ENCODE measurements at regions of chr19 and their contacts with region 1.

Region 1: GRCh38 chr19:40348125-40348913 is at the starts of genes C19orf47 and PLD3:
- DNase-seq: peak; percentile 99 to 100 (median 100)
- ATAC-seq: peak; percentile 98 to 99
- H3K4me3 ChIP-seq: peak within 1 kb of the TSS; percentile 84
- H3K27ac ChIP-seq: peak within 1 kb of the TSS; percentile 69
- H3K4me1 ChIP-seq: peaks cover 3% of the 10 kb centered on the region
- H3K27me3 ChIP-seq: no peaks in the 10 kb centered on the region
- total RNA-seq, gene C19orf47: 116 to 170 (median 144) TPM
- total RNA-seq, gene PLD3: 197 to 235 (median 223) TPM

Region 2: DNA sequence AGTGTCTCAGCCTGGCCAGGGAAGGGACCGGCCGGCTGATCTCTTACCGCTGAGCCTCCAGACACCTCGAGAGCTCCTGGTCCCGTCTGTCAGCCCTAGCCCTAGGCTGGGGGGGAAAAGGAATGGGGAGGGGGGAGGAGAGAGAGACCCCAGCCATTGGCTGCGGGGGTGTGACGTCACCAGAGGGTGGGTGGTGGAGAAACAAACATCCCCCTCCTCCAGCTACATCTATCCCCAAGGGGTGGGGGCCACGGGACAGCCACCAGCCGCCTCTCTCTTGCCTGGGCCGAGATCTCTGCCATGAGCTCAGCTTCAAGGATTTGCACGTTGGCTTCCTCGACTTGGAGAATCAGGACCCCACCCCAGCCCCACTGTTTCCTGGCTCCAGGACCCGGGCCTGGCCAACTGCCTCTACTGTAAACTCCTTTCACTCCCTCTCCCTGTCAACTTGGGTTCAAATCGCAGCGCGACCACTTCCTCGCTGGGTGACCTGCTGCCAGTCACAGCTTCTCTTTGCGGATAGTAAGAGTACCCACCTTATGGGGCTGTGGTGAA is 65.0 kb after region 1 on chr19 and contains the start of gene PRX:
- intact Hi-C with region 1: no loop called
- DNase-seq: peak in 2 of 3 donors; percentile 53 to 68
- ATAC-seq: no peak
- H3K4me3 ChIP-seq: no peak within 1 kb of the TSS
- H3K27ac ChIP-seq: peak within 1 kb of the TSS; percentile 56
- H3K4me1 ChIP-seq: peaks cover 13% of the 10 kb centered on the region
- H3K27me3 ChIP-seq: no peaks in the 10 kb centered on the region
- total RNA-seq, gene PRX: 3.2 to 7.1 (median 4.8) TPM

Region 3: GRCh38 chr19:40444192-40445028 is 96.1 kb after region 1 on chr19 and contains the start of gene SERTAD3:
- intact Hi-C with region 1: loop called in 1 of 4 experiments (anchors 10 kb)
- DNase-seq: peak; percentile 97 to 99 (median 99)
- ATAC-seq: peak; percentile 89
- H3K4me3 ChIP-seq: peak within 1 kb of the TSS; percentile 95
- H3K27ac ChIP-seq: peak within 1 kb of the TSS; percentile 99
- H3K4me1 ChIP-seq: peaks cover 3% of the 10 kb centered on the region
- H3K27me3 ChIP-seq: no peaks in the 10 kb centered on the region
- total RNA-seq, gene SERTAD3: 31.5 to 48.2 (median 36.9) TPM